ENCODE measurements at regions of chr1 and their contacts with region 1.

Region 1: DNA sequence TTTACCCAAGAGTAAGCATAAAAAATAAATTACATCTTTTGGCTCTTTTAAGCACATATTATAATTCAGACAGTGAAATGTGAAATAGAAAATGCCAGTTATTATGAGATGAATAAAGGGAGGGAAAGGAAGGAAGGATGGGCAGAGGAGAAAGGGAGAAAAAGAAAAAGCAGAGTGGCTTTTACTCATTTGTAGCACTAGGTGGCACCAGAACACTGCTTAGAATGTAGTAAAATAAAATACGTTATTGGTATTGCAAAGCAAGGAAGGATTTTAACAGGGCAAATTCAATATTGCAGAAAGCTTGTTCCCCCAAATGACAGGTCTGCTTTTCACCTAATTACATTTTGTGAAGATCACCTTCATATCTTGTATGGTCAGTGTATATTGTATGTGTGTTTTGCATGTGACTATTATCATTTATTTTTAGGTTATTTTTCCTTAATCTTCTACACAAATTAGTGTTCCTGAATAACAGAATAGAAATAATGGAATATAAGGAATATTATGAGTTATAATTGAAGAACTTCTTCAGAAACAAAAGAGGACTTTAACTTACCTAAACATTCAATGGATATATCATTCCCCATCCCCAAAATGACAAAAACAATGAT is 9.1 kb upstream of the PCNX2 start:
- DNase-seq: no peak
- ATAC-seq: peak; percentile 80
- H3K4me3 ChIP-seq: no peak overlapping the region
- H3K27ac ChIP-seq: no peak overlapping the region
- H3K4me1 ChIP-seq: no peaks in the 10 kb centered on the region
- H3K27me3 ChIP-seq: no peaks in the 10 kb centered on the region
- CTCF ChIP-seq: peak; percentile 68 to 83 (median 69); a peak in 5 of 6 replicates
- POLR2A ChIP-seq: no peak
- RAD21 ChIP-seq: peak; percentile 91

Region 2: DNA sequence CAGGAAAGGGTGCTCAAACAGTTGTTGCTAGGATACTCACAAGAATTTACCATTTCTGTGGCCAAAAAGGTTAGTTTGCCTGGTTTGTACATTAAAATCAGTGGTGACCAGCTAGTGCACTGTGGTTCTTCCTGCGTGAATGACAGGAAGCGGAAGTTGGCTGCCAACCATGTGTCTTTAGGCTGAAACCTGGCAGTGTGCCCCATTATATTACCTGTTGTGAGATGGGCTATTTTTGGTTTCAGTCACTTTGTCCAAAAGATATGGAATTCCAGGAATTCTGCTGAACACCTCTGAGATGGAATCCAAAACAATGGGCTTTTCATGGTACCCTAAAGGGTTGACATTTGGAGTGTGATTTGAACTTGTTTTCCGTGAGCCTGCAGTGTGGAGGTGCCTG is 36.5 kb after region 1 on chr1:
- CTCF ChIA-PET with region 1: no interaction called
- POLR2A ChIA-PET with region 1: no interaction called
- RAD21 ChIA-PET with region 1: no interaction called
- intact Hi-C with region 1: no loop called
- DNase-seq: no peak
- ATAC-seq: peak; percentile 53; the same call in 1 of the 2 replicates
- H3K4me3 ChIP-seq: no peak overlapping the region
- H3K27ac ChIP-seq: no peak overlapping the region
- H3K4me1 ChIP-seq: peaks cover 4 to 20% of the 10 kb centered on the region in 2 experiments; a peak in 2 of 4 replicates
- H3K27me3 ChIP-seq: no peaks in the 10 kb centered on the region
- CTCF ChIP-seq: no peak
- POLR2A ChIP-seq: no peak
- RAD21 ChIP-seq: no peak

Region 3: DNA sequence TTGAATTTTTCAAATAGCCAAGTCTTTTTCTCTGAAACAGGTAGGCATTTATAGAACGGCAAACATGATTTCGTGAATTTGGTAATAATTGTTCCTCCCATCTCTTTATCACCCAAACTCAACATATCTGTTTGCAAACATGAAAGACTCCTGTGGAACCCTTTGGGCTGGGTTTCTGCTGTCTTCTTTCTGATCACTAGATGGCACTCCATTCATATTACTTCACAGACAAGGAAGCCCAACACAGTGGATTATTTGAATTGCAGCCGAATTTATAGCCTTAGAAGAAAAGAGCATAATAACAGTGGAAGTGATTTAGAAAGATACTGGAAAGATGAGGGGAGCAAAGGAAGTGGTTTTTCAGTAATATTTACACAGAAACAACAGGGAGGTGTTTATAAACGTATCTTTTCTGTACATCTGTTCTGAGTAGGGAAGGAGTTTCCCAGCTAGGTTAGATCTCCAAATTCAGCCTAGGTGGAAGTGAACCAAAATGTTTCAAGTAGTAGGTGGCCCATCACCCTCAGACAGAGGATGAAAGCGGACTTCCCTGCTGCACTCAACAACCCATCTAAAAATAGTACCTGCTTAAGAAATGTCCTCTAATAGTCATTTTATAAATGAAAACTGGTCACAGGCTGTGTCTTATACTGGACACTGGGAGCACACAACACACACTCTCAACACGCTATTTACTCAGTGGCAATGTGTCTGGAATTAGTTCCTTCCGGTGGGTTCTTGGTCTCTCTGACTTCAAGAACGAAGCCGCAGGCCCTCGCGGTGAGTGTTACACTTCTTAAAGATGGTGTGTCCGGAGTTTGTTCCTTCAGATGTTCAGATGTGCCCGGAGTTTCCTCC is 90.5 kb after region 1 on chr1:
- CTCF ChIA-PET with region 1: no interaction called
- POLR2A ChIA-PET with region 1: no interaction called
- RAD21 ChIA-PET with region 1: no interaction called
- intact Hi-C with region 1: loop called (anchors 10 kb)
- DNase-seq: peak; percentile 54
- ATAC-seq: peak; percentile 97
- H3K4me3 ChIP-seq: no peak overlapping the region
- H3K27ac ChIP-seq: no peak overlapping the region
- H3K4me1 ChIP-seq: no peaks in the 10 kb centered on the region
- H3K27me3 ChIP-seq: no peaks in the 10 kb centered on the region
- CTCF ChIP-seq: peak; percentile 86 to 92 (median 86); a peak in 5 of 6 replicates
- POLR2A ChIP-seq: no peak
- RAD21 ChIP-seq: peak; percentile 93

Region 4: DNA sequence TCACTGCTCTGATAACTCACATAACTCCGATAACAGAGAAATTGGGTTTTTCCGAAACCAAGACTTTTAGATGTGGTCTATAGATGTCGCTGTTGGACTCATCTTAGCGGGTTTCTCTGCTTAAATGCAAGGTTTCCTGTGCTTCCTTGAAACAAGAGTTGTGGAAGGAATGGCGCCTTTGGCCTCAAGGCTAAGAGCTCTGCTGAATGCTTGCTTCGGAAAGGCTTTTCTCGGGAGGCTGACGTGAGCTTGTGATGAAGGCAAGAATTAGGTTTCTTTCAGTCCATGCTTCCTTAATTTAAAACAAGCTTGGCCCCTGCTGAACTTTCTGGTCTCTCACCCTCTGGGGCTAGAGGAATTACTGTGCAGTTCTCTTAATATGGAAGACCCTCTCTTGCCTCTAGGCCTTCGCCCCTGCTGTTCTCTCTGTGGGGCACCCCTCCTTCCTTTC is 136.4 kb after region 1 on chr1:
- CTCF ChIA-PET with region 1: interaction called, 7 read pairs
- POLR2A ChIA-PET with region 1: no interaction called
- RAD21 ChIA-PET with region 1: no interaction called
- intact Hi-C with region 1: loop called (anchors 5 kb)
- DNase-seq: peak; percentile 71
- ATAC-seq: peak; percentile 83
- H3K4me3 ChIP-seq: no peak overlapping the region
- H3K27ac ChIP-seq: no peak overlapping the region
- H3K4me1 ChIP-seq: peaks cover 0 to 14% of the 10 kb centered on the region in 2 experiments; a peak in 2 of 4 replicates
- H3K27me3 ChIP-seq: no peaks in the 10 kb centered on the region
- CTCF ChIP-seq: peak; percentile 69 to 81 (median 78)
- POLR2A ChIP-seq: no peak
- RAD21 ChIP-seq: peak; percentile 95

Region 5: GRCh38 chr1:233790662-233791375 is 486.2 kb after region 1 on chr1:
- CTCF ChIA-PET with region 1: interaction called, 3 read pairs
- POLR2A ChIA-PET with region 1: no interaction called
- RAD21 ChIA-PET with region 1: no interaction called
- intact Hi-C with region 1: loop called (anchors 5 kb)
- DNase-seq: peak; percentile 43
- ATAC-seq: peak; percentile 99
- H3K4me3 ChIP-seq: no peak overlapping the region
- H3K27ac ChIP-seq: no peak overlapping the region
- H3K4me1 ChIP-seq: no peaks in the 10 kb centered on the region
- H3K27me3 ChIP-seq: no peaks in the 10 kb centered on the region
- CTCF ChIP-seq: peak; percentile 81 to 95 (median 91)
- POLR2A ChIP-seq: no peak
- RAD21 ChIP-seq: peak; percentile 94

Region 6: DNA sequence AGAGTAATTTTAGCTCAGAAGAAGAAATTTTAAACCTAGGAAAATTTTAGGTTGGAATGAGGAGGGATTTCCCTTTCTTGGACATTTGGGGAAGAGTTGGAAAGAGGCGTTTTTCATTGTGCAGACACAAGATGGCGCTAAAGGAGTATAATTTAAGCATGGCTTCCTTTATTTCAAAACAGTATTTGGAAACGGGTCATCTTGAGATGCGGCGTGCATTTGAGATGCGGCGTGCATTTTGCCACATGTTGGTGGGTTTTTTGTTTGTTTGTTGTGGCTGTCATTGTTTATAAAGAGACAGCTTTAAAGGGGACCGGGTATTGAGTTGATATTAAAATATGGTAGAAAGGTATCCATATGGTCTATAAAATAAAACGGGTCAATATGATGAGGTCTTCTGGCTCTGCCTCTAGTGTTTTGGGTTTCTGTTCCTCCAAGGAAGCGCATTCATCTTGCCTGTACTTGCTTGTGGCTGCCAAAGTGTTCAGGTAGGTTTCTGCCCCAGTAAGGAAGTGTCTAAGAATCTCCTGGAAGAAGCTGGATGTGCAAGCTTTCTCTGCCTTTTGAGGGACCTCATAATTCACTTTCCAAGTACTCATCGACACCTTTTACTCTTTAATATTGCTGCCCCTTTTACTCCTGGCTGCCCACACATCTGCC is 810.2 kb after region 1 on chr1:
- CTCF ChIA-PET with region 1: no interaction called
- POLR2A ChIA-PET with region 1: no interaction called
- RAD21 ChIA-PET with region 1: interaction called in 1 of 2 experiments, 5 read pairs
- intact Hi-C with region 1: loop called (anchors 2 kb)
- DNase-seq: peak; percentile 21
- ATAC-seq: peak; percentile 72
- H3K4me3 ChIP-seq: no peak overlapping the region
- H3K27ac ChIP-seq: no peak overlapping the region
- H3K4me1 ChIP-seq: 0 out of 4 replicates have a peak, but pooled peaks cover 0 to 4% of the 10 kb centered on the region in 2 experiments
- H3K27me3 ChIP-seq: no peaks in the 10 kb centered on the region
- CTCF ChIP-seq: peak; percentile 57 to 78 (median 61); a peak in 5 of 6 replicates
- POLR2A ChIP-seq: no peak
- RAD21 ChIP-seq: peak; percentile 76